Testis (tissue), 5 donors: ENCODE measurements at regions of chr2 and their contacts with region 1.

Region 1: GRCh38 chr2:165015052-165015642 is 59.8 kb upstream of the SLC38A11 start:
- DNase-seq: peak; percentile 92
- H3K4me3 ChIP-seq: no peak overlapping the region
- H3K27ac ChIP-seq: no peak overlapping the region
- H3K4me1 ChIP-seq: no peaks in the 10 kb centered on the region
- H3K27me3 ChIP-seq: no peaks in the 10 kb centered on the region
- CTCF ChIP-seq: peak; percentile 71 to 92 (median 72)
- POLR2A ChIP-seq: no peak

Region 2: DNA sequence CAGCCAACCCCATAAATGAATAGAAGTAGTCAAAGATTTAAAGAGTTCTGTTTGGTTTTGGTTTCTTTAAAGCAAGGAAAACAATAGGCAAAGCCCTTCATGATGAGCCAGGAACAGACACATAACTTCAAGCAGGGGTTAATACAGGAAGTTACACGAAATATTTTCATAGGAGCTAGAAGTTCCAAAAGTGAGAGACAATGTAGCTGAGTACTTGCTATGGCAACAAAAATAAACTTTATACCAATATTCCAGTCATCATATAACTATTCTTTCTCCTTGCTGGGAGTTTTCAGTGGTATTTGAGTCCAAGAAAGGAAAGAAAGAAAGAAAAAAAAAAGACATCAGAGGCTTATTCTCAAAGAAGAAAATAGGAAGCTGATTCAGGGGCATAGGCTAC is 229.7 kb before region 1 on chr2:
- intact Hi-C with region 1: no loop called
- DNase-seq: no peak
- H3K4me3 ChIP-seq: no peak overlapping the region
- H3K27ac ChIP-seq: no peak overlapping the region
- H3K4me1 ChIP-seq: peaks cover 8% of the 10 kb centered on the region
- H3K27me3 ChIP-seq: no peaks in the 10 kb centered on the region
- CTCF ChIP-seq: no peak
- POLR2A ChIP-seq: no peak

Region 3: GRCh38 chr2:165149439-165149838 is 134.3 kb after region 1 on chr2:
- intact Hi-C with region 1: no loop called
- DNase-seq: no peak
- H3K4me3 ChIP-seq: no peak overlapping the region
- H3K27ac ChIP-seq: no peak overlapping the region
- H3K4me1 ChIP-seq: no peaks in the 10 kb centered on the region
- H3K27me3 ChIP-seq: no peaks in the 10 kb centered on the region
- CTCF ChIP-seq: no peak
- POLR2A ChIP-seq: no peak

Region 4: DNA sequence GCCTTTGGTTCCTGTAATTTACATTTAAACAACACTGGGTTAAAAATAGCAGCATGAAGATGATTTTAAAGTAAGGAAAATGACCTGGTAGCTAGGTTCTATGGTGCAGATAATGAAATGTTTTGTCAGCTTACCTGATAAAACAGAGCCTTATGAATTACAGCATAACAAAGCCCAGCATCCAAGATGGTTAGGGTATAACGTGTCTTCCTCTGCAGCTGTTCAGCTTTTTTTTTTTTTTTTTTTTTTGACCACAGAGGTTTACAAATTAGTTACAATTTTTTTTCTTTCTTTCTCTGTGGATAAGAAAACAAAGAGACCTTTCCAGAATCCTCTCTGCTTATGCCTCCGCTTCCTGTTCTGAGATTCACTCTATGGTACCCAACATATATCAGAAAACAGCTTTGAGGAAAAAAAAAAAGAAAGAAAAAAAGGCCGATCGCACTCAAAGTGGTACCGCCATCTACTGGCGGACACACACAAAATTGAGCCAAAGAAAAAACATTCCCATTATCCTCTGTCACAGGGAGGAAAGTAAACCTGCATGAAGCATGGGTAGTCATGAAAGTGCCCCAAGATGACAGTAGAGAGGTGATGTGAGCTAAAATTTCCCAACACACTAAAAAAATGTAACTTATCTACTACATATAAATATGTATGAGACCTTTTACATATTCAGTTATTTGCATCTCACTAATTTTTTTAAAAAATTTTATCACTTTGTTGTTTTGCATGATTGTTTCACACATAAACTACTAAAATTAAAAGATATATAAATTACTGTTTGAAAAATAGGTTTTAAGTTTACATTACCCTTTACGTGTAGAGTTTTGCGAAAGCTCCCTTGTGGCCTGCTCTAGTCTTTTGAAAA is 188.8 kb after region 1 on chr2 and contains the start of gene SCN3A:
- intact Hi-C with region 1: loop called (anchors 10 kb)
- DNase-seq: peak; percentile 47
- H3K4me3 ChIP-seq: no peak within 1 kb of the TSS
- H3K27ac ChIP-seq: no peak within 1 kb of the TSS
- H3K4me1 ChIP-seq: no peaks in the 10 kb centered on the region
- H3K27me3 ChIP-seq: no peaks in the 10 kb centered on the region
- CTCF ChIP-seq: peak; percentile 37 to 74 (median 46)
- POLR2A ChIP-seq: no peak
- total RNA-seq, gene SCN3A: 3.7 to 6.9 TPM

Region 5: DNA sequence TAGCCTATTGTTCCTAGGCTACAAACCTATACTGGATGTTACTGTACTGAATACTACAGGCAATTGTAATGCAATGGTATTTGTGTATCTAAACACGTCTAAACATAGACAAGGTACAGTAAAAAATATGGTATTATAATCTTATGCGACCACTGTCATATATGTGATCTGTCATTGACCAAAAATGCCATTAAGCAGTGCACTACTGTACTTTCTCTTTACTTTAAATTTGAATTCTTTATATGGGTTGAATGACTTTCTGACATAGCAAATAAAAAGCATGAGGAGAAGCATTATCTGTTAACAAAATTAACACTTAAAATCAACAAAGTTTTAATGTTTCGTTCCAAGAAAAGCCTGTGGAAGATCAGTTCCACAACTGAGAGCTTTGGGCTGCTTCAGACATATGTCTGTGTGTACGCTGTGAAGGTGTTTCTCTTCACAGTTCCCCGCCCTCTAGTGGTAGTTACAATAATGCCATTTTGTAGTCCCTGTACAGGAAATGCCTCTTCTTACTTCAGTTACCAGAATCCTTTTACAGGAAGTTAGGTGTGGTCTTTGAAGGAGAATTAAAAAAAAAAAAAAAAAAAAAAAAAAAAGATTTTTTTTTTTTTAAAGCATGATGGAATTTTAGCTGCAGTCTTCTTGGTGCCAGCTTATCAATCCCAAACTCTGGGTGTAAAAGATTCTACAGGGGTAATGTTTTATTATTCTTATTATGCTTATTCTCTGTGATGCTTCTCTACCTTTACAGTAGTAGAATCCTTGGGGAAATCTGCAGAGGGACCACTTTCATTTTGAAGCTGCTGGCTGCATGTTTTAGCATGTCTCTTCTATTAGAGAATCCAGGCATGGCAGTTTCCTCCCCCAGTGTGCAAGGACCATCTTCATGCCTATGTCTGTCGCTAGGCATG is 278.6 kb after region 1 on chr2:
- intact Hi-C with region 1: loop called (anchors 10 kb)
- DNase-seq: peak; percentile 67
- H3K4me3 ChIP-seq: no peak overlapping the region
- H3K27ac ChIP-seq: no peak overlapping the region
- H3K4me1 ChIP-seq: no peaks in the 10 kb centered on the region
- H3K27me3 ChIP-seq: no peaks in the 10 kb centered on the region
- CTCF ChIP-seq: peak; percentile 41 to 73 (median 71)
- POLR2A ChIP-seq: no peak